ENCODE measurements at regions of chr5 and their contacts with region 1.

Region 1: GRCh38 chr5:33936004-33936380 is 194 bp upstream of the RXFP3 start:
- DNase-seq: peak; percentile 7
- H3K4me3 ChIP-seq: peak overlapping the region; percentile 60
- H3K27ac ChIP-seq: no peak overlapping the region
- H3K27me3 ChIP-seq: peaks cover 49% of the 10 kb centered on the region
- CTCF ChIP-seq: no peak

Region 2: GRCh38 chr5:33470544-33470943 is 465.4 kb before region 1 on chr5:
- CTCF ChIA-PET with region 1: interaction called, 47 read pairs
- POLR2A ChIA-PET with region 1: no interaction called
- DNase-seq: peak; percentile 37
- H3K4me3 ChIP-seq: no peak overlapping the region
- H3K27ac ChIP-seq: no peak overlapping the region
- H3K27me3 ChIP-seq: no peaks in the 10 kb centered on the region
- CTCF ChIP-seq: peak; percentile 74

Region 3: GRCh38 chr5:33588654-33589372 is 347.2 kb before region 1 on chr5:
- CTCF ChIA-PET with region 1: interaction called, 21 read pairs
- POLR2A ChIA-PET with region 1: no interaction called
- DNase-seq: no peak
- H3K4me3 ChIP-seq: no peak overlapping the region
- H3K27ac ChIP-seq: no peak overlapping the region
- H3K27me3 ChIP-seq: no peaks in the 10 kb centered on the region
- CTCF ChIP-seq: peak; percentile 27

Region 4: GRCh38 chr5:33734537-33734936 is 201.5 kb before region 1 on chr5:
- CTCF ChIA-PET with region 1: interaction called, 12 read pairs
- POLR2A ChIA-PET with region 1: no interaction called
- DNase-seq: no peak
- H3K4me3 ChIP-seq: no peak overlapping the region
- H3K27ac ChIP-seq: no peak overlapping the region
- H3K27me3 ChIP-seq: no peaks in the 10 kb centered on the region
- CTCF ChIP-seq: no peak

Region 5: DNA sequence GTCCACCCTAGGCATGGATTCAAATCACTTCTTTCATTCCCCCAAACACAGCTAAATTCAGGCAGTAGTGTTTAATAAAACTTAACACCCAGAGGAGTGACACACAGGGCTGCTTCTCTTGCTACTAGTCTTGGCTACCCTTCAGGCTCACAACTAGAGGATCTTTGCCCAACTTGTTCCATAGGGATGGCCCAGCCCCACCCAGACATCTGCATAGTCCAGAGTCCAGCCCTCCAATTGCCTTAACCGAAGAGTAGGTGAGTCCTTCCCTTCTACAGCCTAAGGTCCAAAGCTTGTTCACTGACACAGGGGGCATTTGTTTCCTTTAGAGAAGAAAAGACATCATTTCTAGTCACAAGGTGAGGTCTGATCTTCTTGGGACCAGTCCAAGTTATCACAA is 15.0 kb before region 1 on chr5:
- CTCF ChIA-PET with region 1: interaction called, 12 read pairs
- POLR2A ChIA-PET with region 1: no interaction called
- DNase-seq: no peak
- H3K4me3 ChIP-seq: no peak overlapping the region
- H3K27ac ChIP-seq: no peak overlapping the region
- H3K27me3 ChIP-seq: peaks cover 18% of the 10 kb centered on the region
- CTCF ChIP-seq: no peak